Stomach (tissue), 19 donors: ENCODE measurements at regions of chr3 and their contacts with region 1.

Region 1: DNA sequence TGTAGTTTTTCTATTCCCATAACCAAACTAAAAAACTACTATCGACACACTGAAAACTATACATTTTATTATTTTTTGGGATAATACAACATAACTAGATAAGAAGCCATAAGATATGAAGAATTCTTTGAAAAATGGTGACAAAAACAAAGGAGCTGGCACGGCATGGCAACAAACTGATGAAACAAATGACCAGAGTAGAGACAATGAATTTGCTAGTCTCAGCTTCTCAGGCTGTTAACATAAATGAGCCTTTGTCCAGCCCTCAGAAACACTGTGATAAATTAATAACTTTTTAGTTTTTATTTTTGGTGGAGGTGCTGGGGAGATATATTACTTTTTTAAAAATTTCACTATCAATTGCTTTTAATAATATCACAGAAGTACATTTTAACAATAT is 100.7 kb downstream of the SMARCC1 start:
- DNase-seq: no peak
- H3K4me3 ChIP-seq: no peak overlapping the region
- H3K27ac ChIP-seq: no peak overlapping the region
- H3K4me1 ChIP-seq: no peaks in the 10 kb centered on the region
- H3K27me3 ChIP-seq: no peaks in the 10 kb centered on the region
- CTCF ChIP-seq: no peak
- EP300 ChIP-seq: no peak
- POLR2A ChIP-seq: no peak

Region 2: DNA sequence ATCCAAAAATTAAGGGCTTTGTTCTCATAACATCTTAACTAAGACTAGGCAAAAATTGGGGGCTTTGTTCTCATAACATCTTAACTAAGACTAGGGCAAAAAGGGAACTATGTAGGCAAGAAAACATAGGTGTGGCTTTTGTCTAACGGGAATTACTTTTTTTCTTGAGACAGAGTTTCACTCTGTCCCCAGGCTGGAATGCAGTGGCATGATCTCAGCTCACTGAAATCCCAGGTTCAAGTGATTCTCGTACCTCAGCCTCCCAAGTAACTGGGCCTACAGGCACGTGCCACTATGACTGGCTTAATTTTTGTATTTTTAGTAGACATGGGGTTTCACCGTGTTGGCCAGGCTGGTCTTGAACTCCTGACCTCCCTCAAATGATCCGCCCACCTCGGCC is 52.6 kb before region 1 on chr3:
- intact Hi-C with region 1: loop called (anchors 5 kb)
- DNase-seq: no peak
- H3K4me3 ChIP-seq: no peak overlapping the region
- H3K27ac ChIP-seq: no peak overlapping the region
- H3K4me1 ChIP-seq: no peaks in the 10 kb centered on the region
- H3K27me3 ChIP-seq: no peaks in the 10 kb centered on the region
- CTCF ChIP-seq: no peak
- EP300 ChIP-seq: no peak
- POLR2A ChIP-seq: no peak